A549 (cell line): ENCODE measurements at regions of chr17 and their contacts with region 1.

Region 1: GRCh38 chr17:49230636-49231562 is at the start of gene PHOSPHO1:
- DNase-seq: peak; percentile 81 to 97
- ATAC-seq: peak; percentile 84 to 93
- H3K4me3 ChIP-seq: peak within 1 kb of the TSS; percentile 62
- H3K27ac ChIP-seq: peak within 1 kb of the TSS; percentile 33 to 74; a peak in 5 of 6 replicates
- H3K4me1 ChIP-seq: peaks cover 16% of the 10 kb centered on the region
- CTCF ChIP-seq: no peak
- EP300 ChIP-seq: no peak
- POLR2A ChIP-seq: peak; percentile 26; the same call in 1 of the 2 replicates
- RAD21 ChIP-seq: no peak
- polyA plus RNA-seq, gene PHOSPHO1: 0.32 and 0.34 TPM in 2 replicates

Region 2: DNA sequence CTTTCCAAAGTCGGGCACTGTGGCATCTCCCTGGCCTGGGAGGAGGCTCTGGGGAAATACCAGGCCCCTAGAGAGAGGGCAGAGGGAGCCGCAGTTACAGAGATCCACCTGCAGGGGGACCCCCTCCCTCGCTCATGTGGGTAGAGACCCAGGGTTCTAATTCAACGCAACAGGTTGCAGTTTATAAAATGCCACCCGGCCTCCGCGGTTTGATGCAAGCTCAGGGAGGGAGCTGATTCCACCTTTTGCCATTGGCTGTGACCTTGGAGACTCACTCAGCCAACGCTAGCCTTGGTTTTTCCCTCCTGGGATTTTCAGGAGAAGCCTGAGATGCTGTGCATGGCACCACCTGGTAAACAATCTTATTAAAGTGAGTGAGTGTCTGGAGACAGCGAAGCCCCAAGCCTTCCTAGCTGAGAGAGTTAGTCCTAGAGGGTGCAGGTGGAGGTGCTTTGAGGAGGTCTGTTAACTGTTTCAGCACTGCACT is 425.9 kb before region 1 on chr17:
- CTCF ChIA-PET with region 1: interaction called, 10 read pairs
- POLR2A ChIA-PET with region 1: no interaction called
- DNase-seq: peak; percentile 78 to 96
- ATAC-seq: peak; percentile 95
- H3K4me3 ChIP-seq: no peak overlapping the region
- H3K27ac ChIP-seq: peak overlapping the region; percentile 53 to 73
- H3K4me1 ChIP-seq: peaks cover 56% of the 10 kb centered on the region
- CTCF ChIP-seq: peak; percentile 97
- EP300 ChIP-seq: no peak
- POLR2A ChIP-seq: no peak
- RAD21 ChIP-seq: peak; percentile 99

Region 3: GRCh38 chr17:49045376-49045775 is 185.5 kb before region 1 on chr17:
- CTCF ChIA-PET with region 1: interaction called, 42 read pairs
- POLR2A ChIA-PET with region 1: no interaction called
- DNase-seq: no peak
- ATAC-seq: peak in 1 of 2 experiments; percentile 26; a peak in 1 of 6 replicates
- H3K4me3 ChIP-seq: no peak overlapping the region
- H3K27ac ChIP-seq: no peak overlapping the region
- H3K4me1 ChIP-seq: peaks cover 14% of the 10 kb centered on the region
- CTCF ChIP-seq: no peak
- EP300 ChIP-seq: no peak
- POLR2A ChIP-seq: no peak
- RAD21 ChIP-seq: no peak

Region 4: GRCh38 chr17:49101054-49101947 is 129.6 kb before region 1 on chr17:
- CTCF ChIA-PET with region 1: interaction called, 14 read pairs
- POLR2A ChIA-PET with region 1: no interaction called
- DNase-seq: no peak
- ATAC-seq: peak; percentile 53 to 54
- H3K4me3 ChIP-seq: no peak overlapping the region
- H3K27ac ChIP-seq: peak overlapping the region; percentile 59 to 83
- H3K4me1 ChIP-seq: peaks cover 32% of the 10 kb centered on the region
- CTCF ChIP-seq: no peak
- EP300 ChIP-seq: no peak
- POLR2A ChIP-seq: no peak
- RAD21 ChIP-seq: no peak

Region 5: DNA sequence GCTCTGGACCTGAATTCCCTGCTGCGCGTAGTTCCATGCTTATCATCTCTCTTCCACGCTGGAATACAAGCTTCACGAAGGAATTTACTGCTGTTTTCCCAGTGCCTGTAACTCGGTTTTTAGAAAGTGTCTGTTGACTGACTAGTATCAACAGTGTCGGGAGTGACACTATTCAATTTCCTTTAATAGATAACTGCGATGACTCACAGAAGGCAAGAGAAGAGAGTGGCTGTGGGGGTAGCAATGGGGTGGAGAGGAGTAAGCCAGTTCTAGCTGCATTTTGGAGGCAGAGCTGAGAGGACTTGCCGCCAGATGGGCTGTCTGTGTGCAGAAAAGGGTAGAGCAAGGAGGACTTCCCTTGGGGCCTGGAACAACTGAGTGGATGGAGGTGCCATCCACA is 73.1 kb before region 1 on chr17:
- CTCF ChIA-PET with region 1: interaction called, 10 read pairs
- POLR2A ChIA-PET with region 1: no interaction called
- DNase-seq: peak; percentile 47 to 81
- ATAC-seq: peak; percentile 58 to 81; a peak in 5 of 6 replicates
- H3K4me3 ChIP-seq: no peak overlapping the region
- H3K27ac ChIP-seq: peak overlapping the region in 1 of 2 experiments; percentile 63; a peak in 3 of 6 replicates
- H3K4me1 ChIP-seq: peaks cover 17% of the 10 kb centered on the region
- CTCF ChIP-seq: no peak
- EP300 ChIP-seq: no peak
- POLR2A ChIP-seq: no peak
- RAD21 ChIP-seq: no peak

Region 6: GRCh38 chr17:49210158-49211029 is 20.5 kb before region 1 on chr17 and contains the starts of genes ABI3 and GNGT2:
- CTCF ChIA-PET with region 1: interaction called, 224 read pairs
- POLR2A ChIA-PET with region 1: no interaction called
- DNase-seq: no peak
- ATAC-seq: no peak
- H3K4me3 ChIP-seq: no peak within 1 kb of the TSS
- H3K27ac ChIP-seq: no peak within 1 kb of the TSS
- H3K4me1 ChIP-seq: peaks cover 5% of the 10 kb centered on the region; the same call in 1 of the 3 replicates
- CTCF ChIP-seq: no peak
- EP300 ChIP-seq: no peak
- POLR2A ChIP-seq: no peak
- RAD21 ChIP-seq: no peak
- polyA plus RNA-seq, gene ABI3: not detected in 2 replicates
- polyA plus RNA-seq, gene GNGT2: not detected in 2 replicates

Region 7: DNA sequence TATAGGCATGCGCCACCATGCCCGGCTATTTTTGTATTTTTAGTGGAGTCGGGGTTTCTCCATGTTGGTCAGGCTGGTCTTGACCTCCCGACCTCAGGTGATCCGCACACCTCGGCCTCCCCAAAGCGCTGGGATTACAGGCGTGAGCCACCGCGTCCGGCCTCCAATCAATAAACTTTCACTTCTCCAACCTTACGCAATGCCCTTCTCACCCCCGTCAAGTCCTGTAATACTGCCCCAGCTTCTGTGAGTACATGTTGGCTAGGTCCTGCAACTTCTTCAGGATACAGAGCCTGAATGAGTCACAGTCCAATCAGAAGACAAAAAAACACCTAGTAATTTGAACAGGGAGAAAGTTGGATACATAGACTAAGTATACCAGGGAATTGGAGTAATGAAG is 46.7 kb after region 1 on chr17:
- CTCF ChIA-PET with region 1: interaction called, 19 read pairs
- POLR2A ChIA-PET with region 1: no interaction called
- DNase-seq: no peak
- ATAC-seq: no peak
- H3K4me3 ChIP-seq: no peak overlapping the region
- H3K27ac ChIP-seq: no peak overlapping the region
- H3K4me1 ChIP-seq: no peaks in the 10 kb centered on the region
- CTCF ChIP-seq: no peak
- EP300 ChIP-seq: no peak
- POLR2A ChIP-seq: no peak
- RAD21 ChIP-seq: no peak